Breast epithelium (tissue), 4 donors: ENCODE measurements at regions of chr5 and their contacts with region 1.

Region 1: GRCh38 chr5:52787600-52788504 is at the starts of genes ITGA1 and PELO:
- DNase-seq: peak; percentile 61 to 67
- H3K4me3 ChIP-seq: peak within 1 kb of the TSS; percentile 67 to 92 (median 67)
- H3K27ac ChIP-seq: peak within 1 kb of the TSS; percentile 89 to 98
- H3K4me1 ChIP-seq: no peaks in the 10 kb centered on the region
- H3K27me3 ChIP-seq: no peaks in the 10 kb centered on the region
- CTCF ChIP-seq: no peak
- POLR2A ChIP-seq: no peak
- total RNA-seq, gene ITGA1: 26.2 to 49.2 (median 36.6) TPM
- total RNA-seq, gene PELO: 11.7 to 16.7 (median 12.1) TPM

Region 2: GRCh38 chr5:52909192-52909591 is 121.3 kb after region 1 on chr5:
- intact Hi-C with region 1: loop called (anchors 10 kb)
- DNase-seq: no peak
- H3K4me3 ChIP-seq: no peak overlapping the region
- H3K27ac ChIP-seq: no peak overlapping the region
- H3K4me1 ChIP-seq: no peaks in the 10 kb centered on the region
- H3K27me3 ChIP-seq: no peaks in the 10 kb centered on the region
- CTCF ChIP-seq: no peak
- POLR2A ChIP-seq: no peak

Region 3: DNA sequence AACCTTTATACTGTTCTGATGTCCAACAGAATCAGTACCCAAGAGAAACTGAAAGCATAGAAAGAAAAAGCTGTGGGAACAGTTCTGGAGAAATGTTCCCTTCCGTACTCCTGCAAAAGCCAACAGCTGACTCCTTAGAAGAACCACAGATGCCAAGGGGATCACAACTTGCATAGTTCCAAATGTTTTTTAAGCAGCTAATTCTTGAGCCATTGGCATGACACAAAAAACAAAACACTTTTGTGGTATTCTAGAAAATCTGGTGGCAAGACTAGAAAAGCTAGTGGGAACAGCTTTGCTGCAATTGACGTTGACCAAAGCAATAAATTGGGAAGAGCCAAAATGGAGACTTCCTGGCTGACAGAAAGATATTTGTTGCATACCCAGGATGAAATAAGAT is 1332.6 kb after region 1 on chr5:
- intact Hi-C with region 1: no loop called
- DNase-seq: no peak
- H3K4me3 ChIP-seq: no peak overlapping the region
- H3K27ac ChIP-seq: no peak overlapping the region
- H3K4me1 ChIP-seq: no peaks in the 10 kb centered on the region
- H3K27me3 ChIP-seq: no peaks in the 10 kb centered on the region
- CTCF ChIP-seq: no peak
- POLR2A ChIP-seq: no peak